Activated CD4-positive, alpha-beta memory T cell treated with anti-CD3 and anti-CD28 coated beads for 36 hours (primary cell): ENCODE measurements at regions of chr16 and their contacts with region 1.

Region 1: DNA sequence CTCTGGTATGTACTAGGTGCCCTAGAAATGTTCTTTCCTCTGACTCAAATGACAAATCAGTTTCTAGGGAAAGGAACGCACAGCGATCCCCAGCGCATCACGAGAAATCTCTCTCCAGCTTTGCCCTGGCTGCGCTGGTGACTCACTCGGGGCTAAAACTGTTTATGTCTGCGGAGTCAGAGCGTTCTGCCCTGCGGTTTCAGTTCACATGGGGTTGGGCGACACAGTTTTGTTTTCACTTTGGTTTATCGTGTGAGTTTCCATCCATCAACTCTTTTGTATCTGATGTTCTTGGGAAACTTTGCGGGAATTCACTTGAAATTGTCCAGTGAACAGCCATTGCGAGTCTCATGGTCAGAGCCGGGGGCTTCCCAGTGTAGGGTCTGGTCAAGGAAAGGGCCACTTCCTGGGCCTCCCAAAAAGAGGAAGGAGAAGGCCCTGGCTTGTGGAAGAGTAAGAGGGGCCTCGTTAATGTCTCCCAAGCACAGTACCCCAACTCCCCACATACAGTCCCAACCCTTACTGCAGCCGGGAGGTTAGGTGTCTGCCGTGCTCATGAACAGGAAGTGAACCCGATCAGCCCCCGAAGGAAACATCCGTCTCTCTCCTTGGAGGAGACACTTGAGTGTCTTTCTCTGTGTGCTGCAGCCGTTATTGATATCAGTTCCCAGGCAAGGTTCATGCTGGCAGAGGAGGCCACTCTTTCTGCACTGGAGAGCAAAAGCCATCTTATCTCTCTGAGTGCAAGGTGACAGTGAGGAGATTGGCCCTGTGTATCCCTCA is 643.2 kb downstream of the WWOX start:
- DNase-seq: peak; percentile 94
- H3K4me3 Mint-ChIP-seq: peak overlapping the region; percentile 73
- H3K27ac Mint-ChIP-seq: peak overlapping the region; percentile 95
- H3K4me1 Mint-ChIP-seq: peaks cover 40% of the 10 kb centered on the region
- H3K27me3 Mint-ChIP-seq: no peaks in the 10 kb centered on the region

Region 2: GRCh38 chr16:78761427-78761826 is 18.7 kb after region 1 on chr16:
- CTCF ChIA-PET with region 1: no interaction called
- POLR2A ChIA-PET with region 1: no interaction called
- intact Hi-C with region 1: loop called (anchors 2 kb)
- DNase-seq: peak; percentile 65
- H3K4me3 Mint-ChIP-seq: no peak overlapping the region
- H3K27ac Mint-ChIP-seq: no peak overlapping the region
- H3K4me1 Mint-ChIP-seq: peaks cover 6% of the 10 kb centered on the region
- H3K27me3 Mint-ChIP-seq: no peaks in the 10 kb centered on the region

Region 3: GRCh38 chr16:78900044-78900811 is 157.5 kb after region 1 on chr16:
- CTCF ChIA-PET with region 1: no interaction called
- POLR2A ChIA-PET with region 1: interaction called, 3 read pairs
- intact Hi-C with region 1: loop called (anchors 1 kb)
- DNase-seq: no peak
- H3K4me3 Mint-ChIP-seq: peak overlapping the region; percentile 20
- H3K27ac Mint-ChIP-seq: peak overlapping the region; percentile 96
- H3K4me1 Mint-ChIP-seq: peaks cover 76% of the 10 kb centered on the region
- H3K27me3 Mint-ChIP-seq: no peaks in the 10 kb centered on the region